ENCODE measurements at regions of chr5 and their contacts with region 1.

Region 1: GRCh38 chr5:96868603-96869371 is 7.5 kb upstream of the ERAP2 start:
- DNase-seq: peak; percentile 62
- H3K4me3 Mint-ChIP-seq: no peak overlapping the region
- H3K27ac Mint-ChIP-seq: peak overlapping the region; percentile 37
- H3K4me1 Mint-ChIP-seq: peaks cover 53% of the 10 kb centered on the region
- H3K27me3 Mint-ChIP-seq: no peaks in the 10 kb centered on the region

Region 2: DNA sequence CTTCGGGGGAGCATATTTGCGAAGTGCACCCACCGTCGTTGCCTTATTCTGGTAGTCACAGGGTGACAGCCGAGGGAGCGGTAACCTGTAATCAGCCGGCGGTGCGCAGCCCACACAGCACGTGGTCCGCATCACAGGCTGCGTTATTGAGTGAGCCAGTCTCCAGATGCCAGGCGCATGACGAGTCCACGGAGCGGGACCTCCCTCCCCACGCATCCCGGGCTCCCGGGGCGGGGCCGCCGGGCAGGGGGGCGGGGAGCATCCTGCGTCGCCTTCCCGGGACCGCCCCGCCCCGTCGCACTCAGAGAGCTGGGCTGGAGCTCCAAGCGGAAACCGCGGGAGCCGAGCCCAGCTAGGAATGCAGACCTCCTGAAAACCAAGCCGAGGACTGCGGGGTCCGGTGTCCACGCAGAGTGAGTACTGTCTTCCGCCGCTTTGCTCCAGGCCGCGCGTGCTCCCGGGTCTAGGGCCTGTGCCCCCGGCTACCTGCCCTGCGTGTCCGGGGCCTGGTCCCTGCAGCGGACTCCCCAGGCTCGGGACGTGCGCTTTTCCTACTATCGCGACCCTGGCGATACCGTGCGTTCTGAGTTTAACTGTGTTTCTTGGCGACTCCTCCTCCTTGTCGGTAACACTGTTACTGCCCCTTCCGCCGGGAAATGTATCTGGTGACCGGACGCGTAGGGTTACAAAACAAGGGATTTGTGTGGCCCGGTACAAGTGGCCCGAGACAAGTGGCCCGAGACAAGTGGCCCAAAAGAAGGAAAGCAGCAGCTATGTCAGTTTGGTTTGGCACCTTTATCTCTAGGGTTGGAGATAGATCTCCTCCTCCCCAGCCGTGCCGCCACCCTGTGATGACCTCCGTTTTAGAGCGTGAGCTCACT is 166.0 kb before region 1 on chr5:
- CTCF ChIA-PET with region 1: no interaction called
- POLR2A ChIA-PET with region 1: no interaction called
- DNase-seq: peak; percentile 73
- H3K4me3 Mint-ChIP-seq: peak overlapping the region; percentile 74
- H3K27ac Mint-ChIP-seq: peak overlapping the region; percentile 83
- H3K4me1 Mint-ChIP-seq: peaks cover 33% of the 10 kb centered on the region
- H3K27me3 Mint-ChIP-seq: no peaks in the 10 kb centered on the region

Region 3: DNA sequence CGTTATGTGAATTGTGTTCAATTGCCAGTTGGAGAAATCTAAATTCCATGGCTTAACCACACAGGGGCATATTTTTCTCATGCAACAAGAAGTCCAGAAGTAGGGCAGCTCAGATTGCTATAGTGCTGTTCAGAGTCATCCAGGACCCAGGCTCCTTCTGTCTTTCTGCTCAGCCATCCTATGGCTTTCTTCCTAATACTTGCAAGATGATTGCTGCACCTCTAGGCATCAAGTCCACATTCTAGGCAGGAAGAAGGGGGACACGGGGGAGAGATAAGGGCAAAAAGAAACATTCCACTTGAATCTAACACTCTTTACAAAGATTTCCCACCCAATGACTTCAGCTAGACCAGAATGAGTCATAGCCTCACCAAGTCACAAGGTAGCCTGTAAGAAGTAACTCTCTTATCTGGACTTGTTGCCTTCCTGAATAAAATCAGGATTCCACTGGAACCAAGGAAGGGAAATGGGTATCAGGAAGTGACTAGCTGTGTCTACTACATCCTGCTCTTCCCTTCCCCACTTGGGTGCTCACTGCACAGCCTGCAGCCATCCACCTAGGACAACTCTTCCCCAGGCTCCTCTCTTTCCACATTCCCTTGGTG is 12.8 kb after region 1 on chr5:
- CTCF ChIA-PET with region 1: interaction called, 17 read pairs
- POLR2A ChIA-PET with region 1: no interaction called
- DNase-seq: no peak
- H3K4me3 Mint-ChIP-seq: peak overlapping the region; percentile 59
- H3K27ac Mint-ChIP-seq: peak overlapping the region; percentile 39
- H3K4me1 Mint-ChIP-seq: peaks cover 79% of the 10 kb centered on the region
- H3K27me3 Mint-ChIP-seq: no peaks in the 10 kb centered on the region

Region 4: DNA sequence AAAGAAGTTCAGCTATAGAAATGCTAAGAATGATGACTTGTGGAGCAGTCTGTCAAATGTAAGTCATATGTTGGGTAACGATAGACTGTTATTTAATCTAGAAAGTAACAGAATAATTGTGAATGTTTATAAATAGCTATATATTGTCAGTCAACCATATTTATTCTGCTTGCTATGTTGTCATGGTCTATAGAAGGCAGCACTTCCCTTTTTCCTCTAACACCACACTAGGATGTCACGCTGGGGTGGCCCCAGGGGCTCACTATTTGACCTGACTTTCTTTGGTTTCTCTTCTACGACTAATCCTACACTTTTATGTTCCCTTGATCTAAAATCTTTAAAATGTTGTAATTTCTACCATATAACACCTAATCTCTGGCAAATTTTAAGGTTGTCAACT is 28.0 kb after region 1 on chr5:
- CTCF ChIA-PET with region 1: interaction called, 12 read pairs
- POLR2A ChIA-PET with region 1: interaction called, 6 read pairs
- DNase-seq: no peak
- H3K4me3 Mint-ChIP-seq: peak overlapping the region; percentile 71
- H3K27ac Mint-ChIP-seq: peak overlapping the region; percentile 89
- H3K4me1 Mint-ChIP-seq: peaks cover 47% of the 10 kb centered on the region
- H3K27me3 Mint-ChIP-seq: no peaks in the 10 kb centered on the region

Measured in activated CD4-positive, alpha-beta T cell treated with anti-CD3 and anti-CD28 coated beads, Interleukin-2, amount 10 ng/mL, durations not matched to agents 7 days and 5 days (primary cell).